ENCODE measurements at regions of chr9 and their contacts with region 1.

Region 1: DNA sequence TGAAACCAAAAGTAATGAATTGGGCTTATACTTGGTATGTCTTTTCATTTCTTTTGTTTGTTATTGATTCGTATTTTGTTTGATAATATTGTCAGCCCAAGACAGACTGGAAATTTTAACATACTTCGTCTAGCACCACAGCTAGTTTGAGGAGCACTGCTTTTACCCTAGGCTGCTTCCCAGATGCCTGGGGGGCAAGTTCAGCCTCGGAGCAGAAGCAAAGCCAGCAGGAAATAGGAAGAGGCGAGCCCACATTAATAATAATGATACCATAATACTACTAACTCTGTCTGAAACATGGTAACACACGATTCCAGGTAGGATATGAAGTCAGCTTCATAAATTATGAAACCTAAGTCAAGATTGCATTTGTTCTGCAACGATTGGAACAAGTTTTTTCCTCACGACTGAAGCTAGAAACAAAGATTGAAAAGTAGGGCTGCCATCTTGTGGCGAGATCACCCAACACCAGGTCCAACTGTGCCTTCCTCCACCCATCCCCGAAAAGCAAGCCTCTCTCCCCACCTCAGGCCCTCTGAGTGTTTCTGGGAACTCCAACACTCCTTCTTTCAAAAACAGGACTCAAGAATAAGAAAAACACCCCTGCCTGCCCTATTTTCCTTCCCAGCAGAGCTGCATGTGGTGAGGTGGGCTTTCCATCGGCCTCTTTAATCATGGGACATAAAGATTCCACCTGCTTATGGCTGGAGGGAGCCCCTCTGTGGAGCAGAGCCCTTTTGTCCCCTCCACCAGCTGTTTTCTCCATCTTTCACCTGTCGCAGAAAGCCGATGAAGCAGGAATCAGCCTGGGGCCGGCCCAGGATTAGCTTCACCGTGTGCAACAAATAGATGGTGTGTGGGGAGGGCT is 236.4 kb downstream of the CAAP1 start:
- DNase-seq: peak; percentile 8
- H3K4me3 ChIP-seq: no peak overlapping the region
- H3K27ac ChIP-seq: no peak overlapping the region
- H3K4me1 ChIP-seq: no peaks in the 10 kb centered on the region
- H3K27me3 ChIP-seq: no peaks in the 10 kb centered on the region
- CTCF ChIP-seq: peak in 2 of 4 experiments; percentile 40 to 48
- POLR2A ChIP-seq: no peak

Region 2: GRCh38 chr9:25876248-25876647 is 780.0 kb before region 1 on chr9:
- intact Hi-C with region 1: loop called (anchors 5 kb)
- DNase-seq: no peak
- H3K4me3 ChIP-seq: no peak overlapping the region
- H3K27ac ChIP-seq: no peak overlapping the region
- H3K4me1 ChIP-seq: no peaks in the 10 kb centered on the region
- H3K27me3 ChIP-seq: no peaks in the 10 kb centered on the region
- CTCF ChIP-seq: no peak
- POLR2A ChIP-seq: no peak

Region 3: GRCh38 chr9:27673641-27674040 is 1017.4 kb after region 1 on chr9:
- intact Hi-C with region 1: no loop called
- DNase-seq: no peak
- H3K4me3 ChIP-seq: no peak overlapping the region
- H3K27ac ChIP-seq: no peak overlapping the region
- H3K4me1 ChIP-seq: no peaks in the 10 kb centered on the region
- H3K27me3 ChIP-seq: no peaks in the 10 kb centered on the region
- CTCF ChIP-seq: no peak
- POLR2A ChIP-seq: no peak

Measured in prostate gland (tissue), 2 donors.